ENCODE measurements at regions of chr22 and their contacts with region 1.

Region 1: GRCh38 chr22:17158568-17159503 is at the start of gene HDHD5:
- DNase-seq: peak; percentile 95
- H3K4me3 ChIP-seq: peak within 1 kb of the TSS; percentile 44 to 77 (median 63)
- H3K27ac ChIP-seq: peak within 1 kb of the TSS; percentile 88 to 93 (median 91)
- H3K4me1 ChIP-seq: peaks cover 0 to 45% (median 26%) of the 10 kb centered on the region in 4 donors
- H3K27me3 ChIP-seq: no peaks in the 10 kb centered on the region
- CTCF ChIP-seq: no peak
- EP300 ChIP-seq: no peak
- POLR2A ChIP-seq: peak; percentile 12 to 15
- total RNA-seq, gene HDHD5: 26.7 to 39.3 (median 34.4) TPM

Region 2: GRCh38 chr22:17084554-17085276 is 74.1 kb before region 1 on chr22 and contains the start of gene IL17RA:
- intact Hi-C with region 1: loop called (anchors 5 kb)
- DNase-seq: peak; percentile 94
- H3K4me3 ChIP-seq: peak within 1 kb of the TSS; percentile 45 to 87 (median 68)
- H3K27ac ChIP-seq: peak within 1 kb of the TSS; percentile 80 to 92 (median 84)
- H3K4me1 ChIP-seq: peaks cover 0 to 28% (median 14%) of the 10 kb centered on the region in 4 donors
- H3K27me3 ChIP-seq: peaks cover 0 to 27% (median 0%) of the 10 kb centered on the region in 3 donors
- CTCF ChIP-seq: no peak
- EP300 ChIP-seq: no peak
- POLR2A ChIP-seq: peak; percentile 26 to 52
- total RNA-seq, gene IL17RA: 7.5 to 8.6 (median 8.4) TPM

Region 3: DNA sequence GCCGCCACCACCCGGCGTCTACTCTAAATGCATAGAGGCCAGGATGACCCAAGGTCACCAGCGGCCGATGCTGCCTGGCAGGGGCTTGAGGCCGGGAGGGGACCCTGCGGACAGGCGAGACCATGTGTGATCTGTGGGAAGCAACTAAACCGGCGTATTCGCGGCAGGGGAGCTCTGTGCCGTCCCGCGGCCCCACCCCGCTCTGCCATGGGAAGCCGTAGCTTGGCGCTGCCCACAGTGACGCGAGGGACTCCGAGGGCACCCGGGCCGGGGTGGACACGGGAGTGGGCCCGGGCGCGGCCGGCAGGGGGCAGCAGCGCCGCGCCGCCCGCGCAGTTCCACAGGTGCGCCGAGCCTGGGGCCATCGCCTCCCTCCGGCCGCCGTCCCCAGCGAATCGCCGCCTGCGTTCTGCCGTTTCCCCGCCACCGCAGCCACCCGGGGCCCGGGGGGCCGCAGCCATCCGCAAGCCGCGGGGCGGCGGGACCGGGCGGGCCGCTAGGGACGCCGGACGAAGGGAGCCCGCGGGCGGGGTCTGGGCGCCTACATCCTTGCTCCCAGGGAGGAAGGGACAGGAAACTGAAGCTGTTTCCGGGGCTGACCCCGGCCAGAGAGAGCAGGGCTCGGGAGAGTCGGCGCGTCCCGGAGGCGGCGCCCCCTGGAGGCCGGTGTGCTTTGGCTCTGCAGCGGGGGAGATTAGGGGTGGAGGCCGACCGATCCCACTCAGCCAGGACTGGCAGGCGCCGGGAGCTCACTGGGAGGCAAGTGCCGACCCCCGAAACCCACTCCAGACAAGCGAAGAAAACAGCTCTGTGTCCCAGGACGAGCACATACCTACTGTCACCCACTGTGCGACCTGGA is 12.7 kb after region 1 on chr22:
- intact Hi-C with region 1: loop called (anchors 1 kb)
- DNase-seq: peak; percentile 93
- H3K4me3 ChIP-seq: peak overlapping the region; percentile 31 to 83 (median 63)
- H3K27ac ChIP-seq: peak overlapping the region; percentile 86 to 92 (median 89)
- H3K4me1 ChIP-seq: peaks cover 0 to 18% (median 8%) of the 10 kb centered on the region in 4 donors
- H3K27me3 ChIP-seq: no peaks in the 10 kb centered on the region
- CTCF ChIP-seq: peak; percentile 63 to 88 (median 80)
- EP300 ChIP-seq: no peak
- POLR2A ChIP-seq: no peak

Region 4: DNA sequence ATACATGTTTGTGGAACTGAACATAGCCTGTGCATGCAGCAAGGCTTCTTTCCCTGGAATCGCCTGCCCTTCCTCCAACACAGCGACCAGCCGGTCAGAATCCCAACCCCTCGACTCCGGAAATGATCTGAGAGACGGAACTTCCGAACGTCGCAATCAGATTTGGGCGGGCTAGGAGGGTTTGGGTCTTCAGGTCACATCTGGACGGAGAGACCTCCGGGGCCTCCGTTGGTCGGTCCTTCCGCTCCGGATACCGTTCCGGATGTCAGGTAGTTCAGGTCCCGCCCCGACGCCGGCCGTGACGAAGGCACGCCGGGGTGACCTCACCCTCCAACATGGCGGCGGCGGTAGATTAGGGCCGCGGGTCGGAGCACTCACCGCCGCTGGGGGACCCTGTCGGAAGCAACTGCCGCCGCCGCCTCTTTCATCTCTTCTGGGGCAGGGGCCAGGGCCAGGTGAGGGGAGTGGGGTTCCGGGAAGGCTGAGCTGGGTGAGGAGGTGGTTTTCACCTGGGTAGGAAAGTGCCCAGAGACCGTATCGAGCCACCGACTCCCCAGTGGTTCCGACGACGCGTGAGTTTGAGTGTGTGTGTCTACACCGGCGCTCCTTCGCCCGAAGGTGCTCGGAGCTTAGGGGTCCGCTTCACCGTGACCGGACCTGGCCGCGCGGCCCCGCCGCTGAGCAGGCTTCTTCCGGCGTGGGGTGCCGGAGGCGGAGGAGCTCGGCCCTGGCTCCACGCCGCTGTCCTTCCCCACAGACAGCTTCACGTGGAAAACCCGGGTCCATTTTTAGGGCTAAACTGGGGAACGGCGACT is 479.8 kb after region 1 on chr22 and contains the start of gene BCL2L13:
- intact Hi-C with region 1: loop called (anchors 5 kb)
- DNase-seq: peak; percentile 96
- H3K4me3 ChIP-seq: peak within 1 kb of the TSS; percentile 63 to 97 (median 79)
- H3K27ac ChIP-seq: peak within 1 kb of the TSS; percentile 93 to 99 (median 99)
- H3K4me1 ChIP-seq: peaks cover 0 to 27% (median 18%) of the 10 kb centered on the region in 4 donors
- H3K27me3 ChIP-seq: no peaks in the 10 kb centered on the region
- CTCF ChIP-seq: no peak
- EP300 ChIP-seq: peak in 1 of 4 donors; percentile 25
- POLR2A ChIP-seq: peak; percentile 96 to 97
- total RNA-seq, gene BCL2L13: 59.2 to 68.1 (median 66.8) TPM

Measured in sigmoid colon (tissue), 7 donors.